PC-9 (cell line): ENCODE measurements at regions of chr1 and their contacts with region 1.

Region 1: GRCh38 chr1:202009326-202010179 is 834 bp upstream of the ELF3 start:
- DNase-seq: peak; percentile 75 to 81
- H3K4me3 ChIP-seq: peak overlapping the region; percentile 52
- H3K27ac ChIP-seq: peak overlapping the region; percentile 97
- H3K4me1 ChIP-seq: peaks cover 68% of the 10 kb centered on the region
- H3K27me3 ChIP-seq: no peaks in the 10 kb centered on the region
- CTCF ChIP-seq: peak; percentile 96

Region 2: GRCh38 chr1:201955009-201955728 is 54.4 kb before region 1 on chr1 and contains the start of gene TIMM17A:
- CTCF ChIA-PET with region 1: no interaction called
- POLR2A ChIA-PET with region 1: interaction called, 21 read pairs
- intact Hi-C with region 1: no loop called
- DNase-seq: peak; percentile 95
- H3K4me3 ChIP-seq: peak within 1 kb of the TSS; percentile 92
- H3K27ac ChIP-seq: peak within 1 kb of the TSS; percentile 83
- H3K4me1 ChIP-seq: peaks cover 10% of the 10 kb centered on the region; the same call in 1 of the 2 replicates
- H3K27me3 ChIP-seq: no peaks in the 10 kb centered on the region
- CTCF ChIP-seq: no peak
- total RNA-seq, gene TIMM17A: 55.7 and 60.4 TPM in 2 replicates

Region 3: GRCh38 chr1:202029171-202029665 is 19.7 kb after region 1 on chr1:
- CTCF ChIA-PET with region 1: no interaction called
- POLR2A ChIA-PET with region 1: interaction called, 60 read pairs
- intact Hi-C with region 1: loop called (anchors 1 kb)
- DNase-seq: peak; percentile 56 to 96
- H3K4me3 ChIP-seq: no peak overlapping the region
- H3K27ac ChIP-seq: peak overlapping the region; percentile 88
- H3K4me1 ChIP-seq: peaks cover 54% of the 10 kb centered on the region
- H3K27me3 ChIP-seq: no peaks in the 10 kb centered on the region
- CTCF ChIP-seq: no peak

Region 4: DNA sequence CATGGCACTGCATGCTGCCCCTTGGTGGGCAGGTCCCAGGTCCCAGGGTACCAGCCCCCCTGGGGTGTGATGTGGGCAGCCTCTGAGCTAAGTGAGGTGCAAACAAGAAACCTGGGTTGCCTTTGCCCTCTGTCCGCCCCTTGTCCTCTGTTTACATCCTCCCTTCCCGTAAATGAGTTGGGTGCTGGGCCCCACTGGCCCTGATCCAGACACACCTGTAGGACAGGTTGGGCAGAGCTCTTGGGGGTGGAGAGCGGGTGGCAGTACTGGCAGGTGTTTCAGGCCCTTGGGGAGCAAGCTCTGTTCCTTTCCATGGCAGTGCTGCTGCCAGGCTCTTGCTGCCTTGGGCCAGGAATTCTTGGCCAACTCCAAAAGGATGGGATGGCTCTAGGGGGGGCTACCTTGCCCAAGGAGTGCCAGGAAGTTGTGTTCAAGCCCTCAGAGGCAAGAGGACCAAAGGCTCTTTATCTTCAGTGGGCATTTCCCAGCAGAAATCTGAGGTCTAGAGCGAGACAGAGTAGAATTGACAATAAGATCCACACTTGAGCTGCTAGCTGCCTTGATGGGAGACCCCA is 36.8 kb after region 1 on chr1:
- CTCF ChIA-PET with region 1: no interaction called
- POLR2A ChIA-PET with region 1: interaction called, 50 read pairs
- intact Hi-C with region 1: loop called (anchors 1 kb)
- DNase-seq: peak; percentile 95 to 97
- H3K4me3 ChIP-seq: peak overlapping the region; percentile 24; the same call in 1 of the 2 replicates
- H3K27ac ChIP-seq: peak overlapping the region; percentile 98
- H3K4me1 ChIP-seq: peaks cover 77% of the 10 kb centered on the region
- H3K27me3 ChIP-seq: no peaks in the 10 kb centered on the region
- CTCF ChIP-seq: no peak

Region 5: GRCh38 chr1:202063100-202063499 is 53.5 kb after region 1 on chr1:
- CTCF ChIA-PET with region 1: no interaction called
- POLR2A ChIA-PET with region 1: interaction called, 40 read pairs
- intact Hi-C with region 1: no loop called
- DNase-seq: peak; percentile 29 to 92
- H3K4me3 ChIP-seq: no peak overlapping the region
- H3K27ac ChIP-seq: peak overlapping the region; percentile 86
- H3K4me1 ChIP-seq: peaks cover 78% of the 10 kb centered on the region
- H3K27me3 ChIP-seq: no peaks in the 10 kb centered on the region
- CTCF ChIP-seq: no peak

Region 6: DNA sequence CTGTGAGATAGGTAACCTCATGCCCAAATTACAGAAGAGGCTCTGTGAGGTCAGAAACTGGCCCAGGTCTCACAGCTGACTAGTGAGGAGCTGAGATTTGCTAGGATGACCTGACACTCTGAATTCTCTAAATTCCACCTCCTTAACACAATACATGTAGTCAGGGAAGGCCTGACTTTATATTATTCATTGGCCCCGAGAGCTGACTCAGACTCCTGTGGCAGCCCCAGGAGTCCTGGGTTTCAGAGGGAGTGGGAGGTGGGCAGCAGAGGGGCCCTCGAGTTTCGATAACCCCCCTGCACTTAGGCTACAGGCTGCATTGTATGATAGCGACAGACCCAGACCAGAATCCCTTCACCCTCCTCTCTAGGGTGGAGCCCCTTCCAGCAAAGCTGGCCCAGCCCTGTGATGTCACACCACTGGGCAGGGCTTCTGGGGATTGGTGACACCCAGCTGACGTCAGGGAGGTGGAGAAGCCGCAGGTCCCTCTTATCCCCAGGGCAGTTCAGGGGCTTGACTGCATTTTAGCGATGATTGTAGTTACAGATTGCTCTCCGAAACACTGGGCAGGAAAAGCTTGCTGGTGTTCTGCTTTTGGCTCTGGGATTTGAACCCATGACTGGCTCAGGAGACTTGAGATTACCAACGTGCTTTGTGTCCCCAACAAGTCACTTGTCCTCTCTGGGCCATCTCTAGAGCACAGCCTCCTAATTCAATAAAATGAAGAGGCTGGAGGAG is 96.2 kb after region 1 on chr1:
- CTCF ChIA-PET with region 1: interaction called, 4 read pairs
- POLR2A ChIA-PET with region 1: interaction called, 66 read pairs
- intact Hi-C with region 1: loop called (anchors 1 kb)
- DNase-seq: peak; percentile 91 to 95
- H3K4me3 ChIP-seq: peak overlapping the region; percentile 26; the same call in 1 of the 2 replicates
- H3K27ac ChIP-seq: peak overlapping the region; percentile 99
- H3K4me1 ChIP-seq: peaks cover 76% of the 10 kb centered on the region
- H3K27me3 ChIP-seq: no peaks in the 10 kb centered on the region
- CTCF ChIP-seq: no peak

Region 7: GRCh38 chr1:202122639-202123335 is 113.2 kb after region 1 on chr1 and contains the start of gene GPR37L1:
- CTCF ChIA-PET with region 1: interaction called, 3 read pairs
- POLR2A ChIA-PET with region 1: interaction called, 3 read pairs
- intact Hi-C with region 1: loop called (anchors 1 kb)
- DNase-seq: peak; percentile 51 to 65
- H3K4me3 ChIP-seq: no peak within 1 kb of the TSS
- H3K27ac ChIP-seq: no peak within 1 kb of the TSS
- H3K4me1 ChIP-seq: peaks cover 11% of the 10 kb centered on the region
- H3K27me3 ChIP-seq: no peaks in the 10 kb centered on the region
- CTCF ChIP-seq: peak; percentile 57
- total RNA-seq, gene GPR37L1: 0.30 and 0.33 TPM in 2 replicates

Region 8: DNA sequence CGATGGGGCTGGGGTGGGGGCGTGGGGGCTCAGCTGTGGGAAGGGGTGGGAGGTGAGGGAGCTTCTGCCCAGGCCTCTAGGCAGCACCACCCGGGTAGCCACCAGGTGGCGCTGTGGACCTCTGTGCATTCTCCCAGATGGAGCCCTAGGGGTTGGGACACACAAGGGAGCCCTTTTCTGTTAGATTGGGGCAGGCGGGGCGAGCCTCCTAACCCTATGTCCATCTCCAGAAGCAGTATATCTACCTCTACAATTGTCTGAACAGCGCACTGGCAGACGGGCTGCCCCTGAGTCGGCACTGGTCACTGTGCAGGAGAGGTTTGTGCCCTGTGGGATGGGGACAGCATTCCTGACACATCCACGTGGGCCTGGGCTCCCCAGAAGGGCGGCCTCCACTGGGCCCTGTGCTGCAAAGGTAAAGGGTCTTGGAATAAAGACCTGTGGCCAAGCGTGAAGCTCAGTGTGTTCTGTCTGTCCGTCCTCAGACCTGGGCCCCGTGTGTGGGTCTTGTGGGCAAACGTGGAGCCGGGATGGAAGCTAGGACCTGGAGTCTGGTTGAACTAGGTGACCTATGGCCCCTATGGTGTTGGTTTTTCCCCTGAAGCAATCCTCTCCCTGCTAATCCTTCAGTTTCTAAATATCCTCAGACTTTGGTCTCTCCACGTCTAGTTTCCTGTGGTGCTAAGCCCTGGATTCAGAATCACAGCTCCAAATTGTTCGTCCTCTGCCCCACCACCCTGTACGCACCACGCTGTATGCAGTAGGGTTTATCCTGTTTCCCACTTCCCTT is 179.6 kb after region 1 on chr1:
- CTCF ChIA-PET with region 1: no interaction called
- POLR2A ChIA-PET with region 1: no interaction called
- intact Hi-C with region 1: no loop called
- DNase-seq: peak; percentile 42 to 80
- H3K4me3 ChIP-seq: no peak overlapping the region
- H3K27ac ChIP-seq: no peak overlapping the region
- H3K4me1 ChIP-seq: no peaks in the 10 kb centered on the region
- H3K27me3 ChIP-seq: peaks cover 7% of the 10 kb centered on the region; the same call in 1 of the 2 replicates
- CTCF ChIP-seq: peak; percentile 87